PC-9 (cell line): ENCODE measurements at regions of chr6 and their contacts with region 1.

Region 1: DNA sequence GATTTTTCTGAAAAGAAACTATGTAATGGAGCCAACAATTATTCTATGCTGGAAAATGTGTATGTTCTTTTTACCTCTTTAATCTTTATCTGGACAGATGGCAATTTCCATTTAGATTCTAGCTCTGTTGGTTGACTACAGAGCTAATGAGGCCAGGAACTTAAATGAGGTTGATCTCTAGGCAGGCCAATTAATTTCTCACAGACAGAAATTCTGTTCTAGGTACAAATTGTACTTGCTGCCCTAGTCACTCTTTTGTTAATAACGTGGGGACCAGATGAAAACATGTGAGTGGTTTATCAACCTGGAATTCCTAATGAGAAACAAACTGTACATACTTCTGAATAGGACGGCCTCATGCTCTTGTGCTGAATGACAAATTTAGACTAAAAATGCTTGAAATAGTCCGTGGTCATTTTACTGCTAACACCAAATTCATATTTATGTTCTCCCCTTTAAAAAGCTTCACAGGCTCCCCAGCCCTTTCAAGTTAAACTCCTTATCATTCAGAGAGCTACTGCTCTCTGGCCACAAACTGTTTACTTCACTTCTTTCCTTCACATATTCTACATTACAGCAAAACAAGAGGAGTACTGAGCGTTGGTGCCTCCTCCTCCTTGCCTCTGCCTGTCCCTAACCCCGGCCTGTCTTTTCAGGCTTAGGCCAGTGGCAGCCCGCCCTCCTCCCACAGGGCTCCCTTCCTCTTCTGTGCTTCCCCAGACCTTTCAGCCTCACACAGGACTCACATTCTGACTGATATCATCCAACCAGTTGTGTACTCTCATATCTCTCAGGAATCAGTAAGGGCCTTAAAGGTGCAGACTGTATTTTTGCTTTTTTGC is 41.4 kb downstream of the DTNBP1 start:
- DNase-seq: no peak
- H3K4me3 ChIP-seq: no peak overlapping the region
- H3K27ac ChIP-seq: no peak overlapping the region
- H3K4me1 ChIP-seq: no peaks in the 10 kb centered on the region
- H3K27me3 ChIP-seq: no peaks in the 10 kb centered on the region
- CTCF ChIP-seq: no peak

Region 2: DNA sequence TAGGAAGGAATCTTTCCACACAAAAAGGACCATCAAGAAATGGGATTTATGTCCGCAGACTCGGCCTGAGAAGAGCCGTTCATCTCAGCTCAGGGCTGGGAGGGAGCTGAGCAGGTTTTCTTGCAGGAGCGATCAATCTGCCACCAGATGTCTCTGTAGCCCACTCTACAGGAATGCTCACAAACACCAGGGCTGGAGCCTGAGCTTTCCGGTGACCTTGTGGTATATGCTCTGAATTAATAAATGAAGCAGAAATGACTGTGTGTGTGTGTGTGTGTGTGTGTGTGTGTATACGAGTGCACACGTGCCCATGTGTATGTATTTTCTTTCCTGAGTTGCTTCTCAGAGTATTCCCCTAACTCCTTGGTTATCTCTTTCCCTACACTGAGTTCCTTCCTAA is 1491.8 kb before region 1 on chr6:
- CTCF ChIA-PET with region 1: interaction called, 6 read pairs
- POLR2A ChIA-PET with region 1: no interaction called
- intact Hi-C with region 1: loop called (anchors 1 kb)
- DNase-seq: peak in 1 of 2 experiments; percentile 25
- H3K4me3 ChIP-seq: no peak overlapping the region
- H3K27ac ChIP-seq: no peak overlapping the region
- H3K4me1 ChIP-seq: no peaks in the 10 kb centered on the region
- H3K27me3 ChIP-seq: no peaks in the 10 kb centered on the region
- CTCF ChIP-seq: peak; percentile 55

Region 3: GRCh38 chr6:14144678-14145113 is 1476.7 kb before region 1 on chr6:
- CTCF ChIA-PET with region 1: no interaction called
- POLR2A ChIA-PET with region 1: no interaction called
- intact Hi-C with region 1: loop called (anchors 5 kb)
- DNase-seq: peak in 1 of 2 experiments; percentile 65
- H3K4me3 ChIP-seq: no peak overlapping the region
- H3K27ac ChIP-seq: no peak overlapping the region
- H3K4me1 ChIP-seq: peaks cover 12% of the 10 kb centered on the region
- H3K27me3 ChIP-seq: no peaks in the 10 kb centered on the region
- CTCF ChIP-seq: peak; percentile 95

Region 4: DNA sequence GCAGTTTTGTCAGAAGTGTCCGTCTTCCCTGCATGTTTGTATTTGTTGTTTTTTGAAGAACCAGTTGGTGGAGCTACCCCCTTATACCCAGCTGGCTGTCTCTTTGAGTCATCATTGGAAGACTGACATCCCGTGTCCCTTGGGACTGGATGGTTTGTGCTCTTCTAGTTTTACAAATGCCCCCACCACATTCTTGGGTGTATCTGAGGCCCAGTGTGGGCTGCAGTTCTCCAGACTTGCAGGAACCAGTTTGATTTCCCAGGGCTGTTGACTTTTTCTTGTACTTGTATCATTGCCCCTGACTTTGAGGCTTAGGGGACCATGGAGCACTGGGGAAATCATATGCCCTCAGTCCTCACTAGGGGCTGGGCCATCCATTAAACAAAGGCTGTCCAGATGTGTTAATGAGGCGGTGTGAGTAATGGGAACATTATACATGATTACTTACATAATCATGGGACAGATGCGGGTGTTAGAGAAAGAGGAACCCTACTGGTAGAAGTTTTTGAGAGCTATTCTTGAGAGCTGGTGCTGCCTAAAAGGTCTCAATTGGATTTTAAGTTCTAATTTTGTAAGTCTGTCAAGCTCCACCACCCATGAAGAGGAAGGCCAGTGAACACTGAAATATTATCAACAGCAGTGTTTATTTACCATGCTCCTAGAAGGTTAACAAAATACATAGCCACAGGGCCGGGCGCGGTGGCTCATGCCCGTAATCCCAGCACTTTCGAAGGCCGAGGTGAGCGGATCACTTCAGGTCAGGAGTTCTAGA is 367.2 kb before region 1 on chr6:
- CTCF ChIA-PET with region 1: no interaction called
- POLR2A ChIA-PET with region 1: no interaction called
- intact Hi-C with region 1: loop called (anchors 5 kb)
- DNase-seq: no peak
- H3K4me3 ChIP-seq: no peak overlapping the region
- H3K27ac ChIP-seq: no peak overlapping the region
- H3K4me1 ChIP-seq: peaks cover 69% of the 10 kb centered on the region
- H3K27me3 ChIP-seq: no peaks in the 10 kb centered on the region
- CTCF ChIP-seq: no peak; the same call in 1 of the 2 replicates

Region 5: DNA sequence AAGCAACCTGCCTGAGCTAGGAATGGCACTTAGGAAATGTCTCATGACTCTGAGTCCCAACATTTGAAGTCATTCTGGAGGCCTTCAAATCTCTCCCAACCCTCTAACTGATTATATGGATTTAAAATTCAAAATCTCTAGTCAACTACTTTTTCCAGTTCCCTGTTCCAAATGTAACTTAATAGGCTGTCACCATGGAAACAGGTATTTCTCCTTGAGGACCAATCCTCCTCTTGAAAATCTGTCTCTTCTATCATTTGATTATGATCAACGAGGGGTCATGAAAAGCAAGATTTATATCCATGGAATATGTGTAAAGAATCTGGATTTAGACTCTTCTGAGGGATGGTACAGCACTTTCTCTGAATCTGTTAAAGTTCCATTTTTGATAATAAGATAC is 168.7 kb after region 1 on chr6:
- CTCF ChIA-PET with region 1: no interaction called
- POLR2A ChIA-PET with region 1: no interaction called
- intact Hi-C with region 1: no loop called
- DNase-seq: no peak
- H3K4me3 ChIP-seq: no peak overlapping the region
- H3K27ac ChIP-seq: no peak overlapping the region
- H3K4me1 ChIP-seq: no peaks in the 10 kb centered on the region
- H3K27me3 ChIP-seq: peaks cover 77% of the 10 kb centered on the region
- CTCF ChIP-seq: no peak

Region 6: DNA sequence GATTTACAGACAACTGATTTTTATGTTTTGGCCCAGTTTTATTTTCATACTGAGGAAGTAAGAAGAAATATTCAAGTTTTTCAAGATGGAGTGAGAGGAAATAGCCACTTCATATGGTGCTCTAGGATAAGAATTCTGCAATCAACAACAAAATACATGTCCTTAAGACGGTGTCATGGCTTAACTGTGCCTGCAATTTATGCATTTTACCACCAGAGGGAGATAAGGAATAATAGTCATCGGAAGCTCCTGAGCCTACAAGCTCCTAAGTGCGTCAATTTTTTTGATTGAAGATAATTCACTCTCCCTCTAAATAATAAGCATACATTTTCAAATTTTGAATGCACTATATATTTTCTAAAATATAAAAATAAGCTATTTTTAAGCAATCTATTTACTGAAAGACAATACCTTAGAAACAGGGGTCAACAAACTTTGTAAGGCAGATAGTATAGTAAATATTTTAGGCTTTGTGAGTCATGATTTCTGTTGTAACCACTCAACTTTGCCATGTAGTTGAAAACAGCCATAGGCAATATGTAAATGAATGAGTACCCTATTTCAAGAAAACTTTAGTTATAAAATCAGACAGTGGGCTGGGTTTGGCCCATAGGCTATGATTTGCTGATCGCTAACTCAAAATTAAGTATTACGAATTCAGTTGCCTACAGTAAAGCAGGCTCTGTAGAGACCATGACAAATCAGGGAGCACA is 272.3 kb after region 1 on chr6:
- CTCF ChIA-PET with region 1: no interaction called
- POLR2A ChIA-PET with region 1: no interaction called
- intact Hi-C with region 1: no loop called
- DNase-seq: no peak
- H3K4me3 ChIP-seq: no peak overlapping the region
- H3K27ac ChIP-seq: no peak overlapping the region
- H3K4me1 ChIP-seq: no peaks in the 10 kb centered on the region
- H3K27me3 ChIP-seq: peaks cover 46% of the 10 kb centered on the region
- CTCF ChIP-seq: peak; percentile 62